ENCODE measurements at regions of chr2 and their contacts with region 1.

Region 1: DNA sequence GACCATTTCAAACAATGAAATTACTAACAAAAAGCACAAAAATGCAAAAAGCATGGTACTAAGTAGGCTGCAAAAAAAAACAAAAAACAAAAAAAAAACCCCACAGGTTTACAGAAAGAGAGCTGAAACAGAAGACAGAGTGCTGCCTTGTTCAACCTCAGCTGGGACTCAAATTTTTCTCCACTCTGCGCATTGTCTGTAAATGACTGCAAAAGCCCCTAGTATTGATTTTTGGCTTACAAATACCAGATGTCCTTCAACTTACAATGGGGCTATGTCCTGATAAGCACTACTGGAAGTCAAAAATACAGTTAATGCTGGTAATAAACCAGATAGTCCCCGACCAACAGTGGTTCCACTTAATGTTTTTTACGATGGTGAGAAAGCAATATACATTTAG is 42.2 kb downstream of the UBE2E3 start:
- DNase-seq: no peak
- H3K27ac ChIP-seq: no peak overlapping the region
- CTCF ChIP-seq: no peak

Region 2: GRCh38 chr2:181178823-181179412 is 156.3 kb after region 1 on chr2:
- CTCF ChIA-PET with region 1: interaction called, 10 read pairs
- POLR2A ChIA-PET with region 1: no interaction called
- DNase-seq: peak; percentile 4
- H3K27ac ChIP-seq: no peak overlapping the region
- CTCF ChIP-seq: 0 out of 2 replicates have a peak, but pooled peaks have one; percentile 11

Measured in RWPE1 (cell line).